HepG2 (cell line): ENCODE measurements at regions of chr12 and their contacts with region 1.

Region 1: DNA sequence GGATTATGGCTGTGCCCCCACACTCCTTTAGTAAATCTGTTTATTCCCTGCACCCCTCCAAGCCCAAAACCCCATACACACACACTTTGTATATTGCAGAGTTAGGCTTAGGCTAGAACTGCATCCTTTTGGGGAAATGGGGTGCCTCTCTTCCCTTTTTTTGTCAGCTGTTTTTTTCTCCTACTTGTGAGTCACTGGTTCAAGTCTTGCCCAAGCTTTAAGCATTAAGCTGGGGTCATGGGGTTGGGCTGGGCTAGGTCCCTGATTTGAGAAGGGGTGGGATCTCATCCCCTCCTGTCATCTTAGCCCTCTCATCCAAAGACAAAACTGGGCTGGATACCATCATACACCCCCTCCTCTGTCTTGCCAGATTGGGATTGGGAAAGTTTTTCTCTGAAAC is 1.6 kb downstream of the LRP1 start:
- DNase-seq: no peak
- ATAC-seq: no peak
- H3K4me3 ChIP-seq: peak overlapping the region; percentile 87 to 96 (median 88)
- H3K27ac ChIP-seq: peak overlapping the region; percentile 40
- H3K4me1 ChIP-seq: peaks cover 63% of the 10 kb centered on the region
- H3K27me3 ChIP-seq: no peaks in the 10 kb centered on the region; a peak in 1 of 5 replicates
- CTCF ChIP-seq: no peak
- EP300 ChIP-seq: no peak
- POLR2A ChIP-seq: no peak
- RAD21 ChIP-seq: no peak

Region 2: DNA sequence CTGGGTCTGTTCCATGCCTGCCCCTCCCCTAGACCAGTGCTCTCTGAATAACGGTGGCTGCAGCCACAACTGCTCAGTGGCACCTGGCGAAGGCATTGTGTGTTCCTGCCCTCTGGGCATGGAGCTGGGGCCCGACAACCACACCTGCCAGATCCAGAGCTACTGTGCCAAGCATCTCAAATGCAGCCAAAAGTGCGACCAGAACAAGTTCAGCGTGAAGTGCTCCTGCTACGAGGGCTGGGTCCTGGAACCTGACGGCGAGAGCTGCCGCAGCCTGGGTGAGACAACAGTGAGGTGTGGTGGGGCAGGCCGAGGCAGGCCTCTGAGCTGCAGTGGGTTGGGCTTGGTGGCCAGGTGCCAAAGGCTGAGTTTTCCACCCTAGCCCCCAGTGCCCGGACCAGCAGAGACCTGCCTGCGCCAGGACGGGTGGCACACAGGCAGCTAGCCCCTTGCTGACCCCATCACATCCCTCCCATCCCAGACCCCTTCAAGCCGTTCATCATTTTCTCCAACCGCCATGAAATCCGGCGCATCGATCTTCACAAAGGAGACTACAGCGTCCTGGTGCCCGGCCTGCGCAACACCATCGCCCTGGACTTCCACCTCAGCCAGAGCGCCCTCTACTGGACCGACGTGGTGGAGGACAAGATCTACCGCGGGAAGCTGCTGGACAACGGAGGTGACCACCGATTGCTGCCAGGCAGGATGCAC is 45.7 kb after region 1 on chr12:
- CTCF ChIA-PET with region 1: interaction called, 47 read pairs
- POLR2A ChIA-PET with region 1: interaction called, 103 read pairs
- in situ Hi-C with region 1: loop called (anchors 5 kb)
- intact Hi-C with region 1: loop called (anchors 1 kb)
- DNase-seq: peak; percentile 39
- ATAC-seq: peak; percentile 19
- H3K4me3 ChIP-seq: no peak overlapping the region
- H3K27ac ChIP-seq: no peak overlapping the region
- H3K4me1 ChIP-seq: 0 out of 2 replicates have a peak, but pooled peaks cover 5% of the 10 kb centered on the region
- H3K27me3 ChIP-seq: no peaks in the 10 kb centered on the region
- CTCF ChIP-seq: peak; percentile 83
- EP300 ChIP-seq: no peak
- POLR2A ChIP-seq: peak in 1 of 2 experiments; percentile 38; a peak in 1 of 4 replicates
- RAD21 ChIP-seq: peak; percentile 65

Region 3: GRCh38 chr12:57229634-57230380 is 99.9 kb after region 1 on chr12 and contains the start of gene SHMT2:
- CTCF ChIA-PET with region 1: no interaction called
- POLR2A ChIA-PET with region 1: interaction called, 26 read pairs
- in situ Hi-C with region 1: no loop called
- intact Hi-C with region 1: loop called (anchors 1 kb)
- DNase-seq: peak; percentile 95
- ATAC-seq: peak; percentile 73
- H3K4me3 ChIP-seq: peak within 1 kb of the TSS; percentile 71 to 82 (median 75)
- H3K27ac ChIP-seq: peak within 1 kb of the TSS; percentile 95
- H3K4me1 ChIP-seq: peaks cover 81% of the 10 kb centered on the region
- H3K27me3 ChIP-seq: peaks cover 0 to 21% of the 10 kb centered on the region in 2 experiments; a peak in 4 of 5 replicates
- CTCF ChIP-seq: no peak; the same call in 1 of the 2 replicates
- EP300 ChIP-seq: no peak
- POLR2A ChIP-seq: peak in 1 of 2 experiments; percentile 68; a peak in 2 of 4 replicates
- RAD21 ChIP-seq: no peak
- total RNA-seq, gene SHMT2: 181 and 184 TPM in 2 replicates